AG04450 (cell line): ENCODE measurements at regions of chr7 and their contacts with region 1.

Region 1: GRCh38 chr7:47266131-47266706 is 315.7 kb downstream of the TNS3 start:
- DNase-seq: peak; percentile 20
- H3K4me3 ChIP-seq: no peak overlapping the region
- H3K27ac ChIP-seq: no peak overlapping the region
- H3K27me3 ChIP-seq: no peaks in the 10 kb centered on the region
- CTCF ChIP-seq: peak; percentile 94

Region 2: GRCh38 chr7:47227762-47228177 is 38.4 kb before region 1 on chr7:
- CTCF ChIA-PET with region 1: interaction called, 11 read pairs
- POLR2A ChIA-PET with region 1: no interaction called
- DNase-seq: peak; percentile 18
- H3K4me3 ChIP-seq: no peak overlapping the region
- H3K27ac ChIP-seq: no peak overlapping the region
- H3K27me3 ChIP-seq: peaks cover 5% of the 10 kb centered on the region
- CTCF ChIP-seq: no peak

Region 3: DNA sequence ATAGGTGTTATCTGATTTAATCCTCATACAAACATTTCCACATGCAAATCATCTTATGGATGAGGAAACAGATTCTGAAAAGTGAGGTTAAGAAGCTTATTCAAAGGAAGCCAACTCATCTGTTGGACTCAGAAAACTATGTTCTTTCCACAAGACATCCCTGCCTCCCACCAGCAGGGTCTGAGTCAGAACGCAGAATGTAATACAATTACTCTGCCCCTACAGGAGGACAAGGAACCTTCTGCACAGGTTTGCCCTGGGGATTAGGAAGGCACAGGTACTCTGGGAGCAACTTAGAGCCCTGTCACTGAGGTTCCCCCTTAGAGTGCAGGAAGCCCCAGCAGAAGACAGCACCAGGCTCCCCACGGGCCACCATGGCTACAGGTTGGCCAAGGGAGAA is 60.0 kb after region 1 on chr7:
- CTCF ChIA-PET with region 1: interaction called, 14 read pairs
- POLR2A ChIA-PET with region 1: no interaction called
- DNase-seq: peak; percentile 53
- H3K4me3 ChIP-seq: peak overlapping the region; percentile 31
- H3K27ac ChIP-seq: peak overlapping the region; percentile 74
- H3K27me3 ChIP-seq: no peaks in the 10 kb centered on the region
- CTCF ChIP-seq: peak; percentile 67

Region 4: DNA sequence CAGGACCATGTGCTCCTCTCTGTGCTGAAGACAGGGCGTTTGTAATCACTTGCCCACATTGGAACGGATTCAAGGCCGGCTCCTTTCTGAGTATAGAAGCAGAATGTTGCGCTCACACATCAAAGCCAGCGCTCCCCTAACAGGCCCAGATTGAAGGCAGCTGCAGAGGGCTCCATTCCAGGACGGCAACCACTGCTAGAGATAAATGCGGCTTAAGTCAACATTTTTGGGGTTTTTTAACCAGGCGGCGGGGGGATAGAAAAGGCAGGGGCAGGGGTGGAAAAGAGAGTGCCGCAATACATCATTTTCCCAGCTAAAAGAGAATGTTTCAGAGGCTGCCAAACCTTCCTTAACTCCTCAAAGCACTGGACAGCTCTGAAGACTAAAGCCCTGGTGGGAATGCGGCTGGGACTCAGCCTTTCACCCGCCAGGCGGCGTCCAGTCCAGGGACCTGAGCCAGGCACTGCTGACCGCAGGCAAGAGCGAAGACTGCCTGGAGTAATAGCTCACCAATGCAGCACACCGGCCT is 126.1 kb after region 1 on chr7:
- CTCF ChIA-PET with region 1: interaction called, 16 read pairs
- POLR2A ChIA-PET with region 1: no interaction called
- DNase-seq: peak; percentile 70
- H3K4me3 ChIP-seq: no peak overlapping the region
- H3K27ac ChIP-seq: peak overlapping the region; percentile 39
- H3K27me3 ChIP-seq: no peaks in the 10 kb centered on the region
- CTCF ChIP-seq: peak; percentile 80

Region 5: DNA sequence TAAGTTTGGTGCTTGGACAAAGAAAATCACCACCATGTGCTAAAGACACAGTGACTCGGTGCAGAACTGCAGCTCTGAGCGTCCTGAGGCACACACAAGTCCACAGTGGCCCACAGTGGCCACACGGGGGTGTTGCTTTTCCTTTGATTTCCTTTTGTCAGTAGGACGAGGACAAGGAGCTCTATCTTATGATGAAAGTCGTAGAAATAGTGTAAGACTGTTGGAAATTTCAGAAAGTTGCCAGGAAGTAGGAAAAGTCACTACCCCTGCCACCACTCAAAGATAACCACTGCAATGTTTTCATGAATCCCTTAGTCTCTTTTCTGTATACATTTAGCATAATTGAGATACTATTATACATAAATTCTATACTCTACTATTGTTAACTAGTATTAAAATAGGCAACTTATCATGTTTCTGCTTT is 169.7 kb after region 1 on chr7:
- CTCF ChIA-PET with region 1: interaction called, 36 read pairs
- POLR2A ChIA-PET with region 1: no interaction called
- DNase-seq: peak; percentile 47
- H3K4me3 ChIP-seq: no peak overlapping the region
- H3K27ac ChIP-seq: no peak overlapping the region
- H3K27me3 ChIP-seq: no peaks in the 10 kb centered on the region
- CTCF ChIP-seq: peak; percentile 66

Region 6: DNA sequence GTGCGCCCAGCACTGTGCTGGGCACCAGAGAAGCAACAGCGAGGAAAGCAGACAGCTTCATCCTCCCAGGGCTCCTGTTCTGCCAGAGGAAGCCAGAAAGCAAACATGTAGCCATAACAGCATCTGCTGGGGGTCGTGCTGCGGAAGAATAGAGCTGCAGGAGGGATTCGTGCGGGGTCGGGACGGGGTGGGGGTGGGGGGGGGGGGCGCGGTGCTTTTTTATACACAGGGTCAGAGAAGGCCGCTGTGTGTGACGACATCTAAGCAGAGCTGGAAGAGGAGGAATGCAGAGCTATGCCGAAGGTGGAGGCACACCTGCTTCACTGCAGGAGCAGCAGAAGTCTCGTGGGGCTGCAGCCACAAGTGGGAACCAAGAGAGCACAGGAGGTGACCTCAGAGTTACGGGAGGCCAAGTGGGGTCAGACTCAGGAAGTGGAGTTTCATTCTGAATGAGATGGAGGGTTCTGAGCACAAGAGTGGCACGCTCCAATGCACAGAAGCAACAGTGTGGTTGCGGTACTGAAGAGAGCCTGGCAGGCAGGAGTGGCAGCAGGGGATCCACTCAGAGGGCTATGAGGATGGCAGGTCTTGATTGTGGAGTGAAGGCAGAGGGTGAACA is 671.0 kb after region 1 on chr7:
- CTCF ChIA-PET with region 1: interaction called, 23 read pairs
- POLR2A ChIA-PET with region 1: no interaction called
- DNase-seq: no peak
- H3K4me3 ChIP-seq: no peak overlapping the region
- H3K27ac ChIP-seq: no peak overlapping the region
- H3K27me3 ChIP-seq: no peaks in the 10 kb centered on the region
- CTCF ChIP-seq: no peak